ENCODE measurements at regions of chr13 and their contacts with region 1.

Region 1: GRCh38 chr13:19967621-19968020 is 9.1 kb downstream of the ZMYM2 start:
- DNase-seq: no peak
- H3K4me3 ChIP-seq: no peak overlapping the region
- H3K27ac ChIP-seq: no peak overlapping the region
- H3K4me1 ChIP-seq: peaks cover 8% of the 10 kb centered on the region
- H3K27me3 ChIP-seq: no peaks in the 10 kb centered on the region
- CTCF ChIP-seq: no peak; the same call in 1 of the 2 replicates

Region 2: GRCh38 chr13:19984430-19985218 is 17.0 kb after region 1 on chr13:
- CTCF ChIA-PET with region 1: interaction called, 15 read pairs
- POLR2A ChIA-PET with region 1: interaction called, 3 read pairs
- intact Hi-C with region 1: no loop called
- DNase-seq: peak; percentile 54
- H3K4me3 ChIP-seq: no peak overlapping the region
- H3K27ac ChIP-seq: no peak overlapping the region
- H3K4me1 ChIP-seq: no peaks in the 10 kb centered on the region
- H3K27me3 ChIP-seq: no peaks in the 10 kb centered on the region
- CTCF ChIP-seq: peak; percentile 71

Region 3: DNA sequence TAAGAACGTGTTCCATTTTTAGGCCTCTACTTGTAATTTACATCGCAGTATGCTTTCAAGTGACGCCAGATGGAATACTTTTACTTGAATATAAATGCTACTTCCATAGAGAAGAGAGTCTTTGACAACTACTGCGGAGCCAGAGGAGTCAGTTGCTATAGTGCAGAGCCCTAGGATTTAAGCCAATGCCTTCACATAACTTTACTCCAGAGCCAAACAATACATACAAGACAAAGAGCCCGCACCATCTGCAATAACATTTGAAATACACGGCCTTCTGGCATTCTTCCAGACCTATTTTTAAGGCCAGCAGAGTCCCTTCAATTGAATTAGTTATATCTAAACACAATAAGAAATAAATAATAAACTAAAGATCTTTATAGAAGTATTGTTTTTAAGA is 875.5 kb after region 1 on chr13:
- CTCF ChIA-PET with region 1: no interaction called
- POLR2A ChIA-PET with region 1: no interaction called
- intact Hi-C with region 1: no loop called
- DNase-seq: no peak
- H3K4me3 ChIP-seq: no peak overlapping the region
- H3K27ac ChIP-seq: no peak overlapping the region
- H3K4me1 ChIP-seq: peaks cover 27% of the 10 kb centered on the region
- H3K27me3 ChIP-seq: no peaks in the 10 kb centered on the region
- CTCF ChIP-seq: no peak

Measured in A673 (cell line).